ENCODE measurements at regions of chr4 and their contacts with region 1.

Region 1: DNA sequence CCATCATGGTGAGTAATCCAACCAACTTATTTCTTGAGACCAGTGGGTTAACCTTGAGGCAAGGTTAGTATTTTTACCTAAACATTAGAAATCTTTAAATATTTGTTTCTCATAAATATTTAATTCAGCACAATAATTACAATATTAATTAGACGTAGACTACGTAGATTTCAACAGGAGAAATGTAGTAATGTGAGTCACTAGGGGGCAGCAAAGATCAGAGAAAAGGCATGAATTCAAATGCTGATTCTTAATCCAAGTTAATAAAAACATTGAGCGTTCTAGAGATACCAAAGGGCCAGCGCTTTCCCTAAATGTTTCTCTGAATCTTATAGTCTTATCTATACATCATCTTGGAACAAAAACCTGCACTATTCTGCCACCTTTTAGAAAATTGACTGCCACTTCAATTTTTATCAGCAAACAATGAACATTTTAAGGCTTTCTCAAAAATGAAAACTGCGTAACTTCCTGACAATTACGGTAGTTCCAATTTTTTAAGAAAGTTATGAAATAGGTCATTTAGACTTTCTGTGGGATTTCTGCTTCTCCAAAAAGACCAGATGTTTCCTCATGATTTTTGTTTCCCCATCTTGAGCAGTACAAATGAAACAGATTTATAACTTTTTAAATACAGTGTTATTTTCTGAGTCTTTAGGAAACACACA is 180.7 kb downstream of the GASK1B start:
- DNase-seq: no peak

Region 2: DNA sequence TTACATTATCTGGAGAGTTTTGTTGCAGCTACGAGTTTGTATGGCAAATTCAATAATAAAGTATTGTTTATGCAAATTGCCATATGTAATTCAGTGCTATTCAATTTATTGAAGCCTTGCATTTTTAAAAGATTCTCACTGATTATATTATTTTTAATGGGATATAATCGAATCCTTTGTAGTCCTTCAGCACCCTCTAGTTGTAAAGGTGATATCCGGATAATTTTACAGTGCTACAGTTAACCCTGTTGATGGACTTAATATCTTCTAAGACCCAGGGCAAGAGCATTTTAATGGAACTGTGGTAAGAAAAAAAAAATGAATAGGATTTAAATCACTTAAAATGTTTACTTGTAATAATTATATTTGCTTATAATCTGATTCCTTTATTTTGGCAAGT is 820.2 kb before region 1 on chr4:
- intact Hi-C with region 1: no loop called
- DNase-seq: no peak

Region 3: DNA sequence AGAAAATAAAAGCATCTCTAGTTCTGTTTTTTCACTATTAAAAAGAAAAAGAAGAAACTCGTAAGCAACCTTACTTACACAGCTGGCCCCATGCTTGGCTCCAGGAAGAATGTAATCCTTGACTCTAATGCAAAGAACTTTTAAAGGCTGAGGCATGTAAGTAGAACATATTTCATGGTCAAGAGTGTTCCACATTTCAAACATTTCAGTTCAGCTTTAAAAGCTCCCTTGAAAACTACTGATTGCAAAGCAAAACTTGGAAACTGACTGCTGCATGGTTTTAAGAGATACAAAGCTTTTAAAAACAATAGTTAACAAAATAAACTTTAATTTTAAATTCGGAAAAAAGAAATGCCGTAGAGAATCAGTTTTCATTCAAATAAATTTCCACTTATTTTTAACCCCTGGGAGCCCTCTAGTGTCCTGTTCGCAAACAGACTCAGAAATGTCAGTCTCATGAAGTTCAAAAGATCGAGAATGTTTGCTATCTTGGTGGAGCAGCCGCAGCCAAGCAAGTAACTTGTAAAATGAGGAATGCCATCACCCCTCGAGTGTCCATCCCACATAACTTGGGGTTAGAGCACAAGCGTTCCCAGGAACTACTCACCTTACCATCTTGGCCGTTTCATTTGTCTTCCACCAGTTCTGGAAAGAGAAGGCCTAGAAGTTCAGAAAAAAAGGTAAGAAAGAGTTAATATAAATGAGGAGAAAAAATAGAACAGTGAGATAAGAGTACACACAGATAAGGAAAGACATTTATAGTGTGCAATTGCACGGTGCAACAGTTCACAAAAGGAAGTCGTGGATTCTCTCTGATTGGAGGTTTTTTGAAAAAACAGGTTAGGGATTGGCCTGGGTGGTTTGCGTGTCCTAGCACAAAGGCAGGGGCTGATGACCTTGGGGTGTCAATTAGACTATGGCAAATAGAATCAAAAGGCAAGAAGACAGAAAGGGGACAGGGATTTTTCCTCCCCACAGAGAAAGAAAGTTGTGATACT is 180.4 kb after region 1 on chr4 and contains the start of gene GASK1B:
- intact Hi-C with region 1: loop called (anchors 2 to 5 kb)
- DNase-seq: no peak
- total RNA-seq, gene GASK1B: 51.6 to 82.2 TPM

Region 4: GRCh38 chr4:158250321-158250720 is 258.1 kb after region 1 on chr4:
- intact Hi-C with region 1: no loop called
- DNase-seq: no peak